ENCODE measurements at regions of chr9 and their contacts with region 1.

Region 1: GRCh38 chr9:114434878-114435311 is 47.1 kb upstream of the AKNA start:
- DNase-seq: peak; percentile 47 to 63
- ATAC-seq: peak; percentile 77 to 91; a peak in 5 of 6 replicates
- H3K4me3 ChIP-seq: no peak overlapping the region
- H3K27ac ChIP-seq: no peak overlapping the region
- H3K4me1 ChIP-seq: no peaks in the 10 kb centered on the region
- CTCF ChIP-seq: peak; percentile 66
- EP300 ChIP-seq: no peak
- POLR2A ChIP-seq: no peak
- RAD21 ChIP-seq: peak; percentile 78 to 87

Region 2: DNA sequence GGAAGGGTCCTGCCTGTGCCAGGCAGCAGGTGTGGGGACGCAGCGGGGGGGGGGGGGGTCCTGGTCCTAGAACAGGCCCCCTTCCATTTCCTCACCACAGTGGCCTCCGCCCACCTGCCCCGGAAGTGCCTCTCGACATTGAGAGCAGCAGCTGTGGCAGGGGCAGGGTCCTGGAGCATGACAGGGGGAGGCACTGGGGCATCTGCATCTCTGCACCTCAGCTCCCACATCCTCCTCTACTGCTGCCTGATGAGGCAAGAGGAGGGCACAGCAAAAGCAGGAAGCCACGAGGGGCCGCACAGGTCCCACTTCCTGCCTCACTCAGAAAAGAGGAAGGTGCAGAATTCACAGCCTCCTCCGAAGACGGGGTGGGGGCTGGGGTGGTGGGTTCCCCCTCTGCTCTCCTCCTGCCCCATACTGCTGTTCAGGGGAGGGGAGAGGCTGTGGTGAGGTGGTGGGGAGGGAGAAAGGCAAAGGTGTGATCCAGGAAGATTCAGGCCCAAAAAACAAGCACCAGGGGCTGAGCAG is 61.9 kb before region 1 on chr9:
- CTCF ChIA-PET with region 1: no interaction called
- POLR2A ChIA-PET with region 1: no interaction called
- DNase-seq: no peak
- ATAC-seq: no peak
- H3K4me3 ChIP-seq: no peak overlapping the region
- H3K27ac ChIP-seq: no peak overlapping the region
- H3K4me1 ChIP-seq: no peaks in the 10 kb centered on the region
- CTCF ChIP-seq: no peak
- EP300 ChIP-seq: no peak
- POLR2A ChIP-seq: no peak
- RAD21 ChIP-seq: no peak

Region 3: GRCh38 chr9:114413861-114414301 is 21.0 kb before region 1 on chr9:
- CTCF ChIA-PET with region 1: interaction called, 34 read pairs
- POLR2A ChIA-PET with region 1: interaction called, 3 read pairs
- DNase-seq: no peak
- ATAC-seq: no peak
- H3K4me3 ChIP-seq: no peak overlapping the region
- H3K27ac ChIP-seq: no peak overlapping the region
- H3K4me1 ChIP-seq: no peaks in the 10 kb centered on the region
- CTCF ChIP-seq: no peak
- EP300 ChIP-seq: no peak
- POLR2A ChIP-seq: no peak
- RAD21 ChIP-seq: no peak

Region 4: GRCh38 chr9:114446036-114446435 is 11.1 kb after region 1 on chr9:
- CTCF ChIA-PET with region 1: interaction called, 29 read pairs
- POLR2A ChIA-PET with region 1: no interaction called
- DNase-seq: no peak
- ATAC-seq: no peak; a peak in 1 of 6 replicates
- H3K4me3 ChIP-seq: no peak overlapping the region
- H3K27ac ChIP-seq: no peak overlapping the region; a peak in 1 of 6 replicates
- H3K4me1 ChIP-seq: peaks cover 10% of the 10 kb centered on the region; the same call in 1 of the 3 replicates
- CTCF ChIP-seq: no peak
- EP300 ChIP-seq: no peak
- POLR2A ChIP-seq: no peak
- RAD21 ChIP-seq: no peak

Region 5: DNA sequence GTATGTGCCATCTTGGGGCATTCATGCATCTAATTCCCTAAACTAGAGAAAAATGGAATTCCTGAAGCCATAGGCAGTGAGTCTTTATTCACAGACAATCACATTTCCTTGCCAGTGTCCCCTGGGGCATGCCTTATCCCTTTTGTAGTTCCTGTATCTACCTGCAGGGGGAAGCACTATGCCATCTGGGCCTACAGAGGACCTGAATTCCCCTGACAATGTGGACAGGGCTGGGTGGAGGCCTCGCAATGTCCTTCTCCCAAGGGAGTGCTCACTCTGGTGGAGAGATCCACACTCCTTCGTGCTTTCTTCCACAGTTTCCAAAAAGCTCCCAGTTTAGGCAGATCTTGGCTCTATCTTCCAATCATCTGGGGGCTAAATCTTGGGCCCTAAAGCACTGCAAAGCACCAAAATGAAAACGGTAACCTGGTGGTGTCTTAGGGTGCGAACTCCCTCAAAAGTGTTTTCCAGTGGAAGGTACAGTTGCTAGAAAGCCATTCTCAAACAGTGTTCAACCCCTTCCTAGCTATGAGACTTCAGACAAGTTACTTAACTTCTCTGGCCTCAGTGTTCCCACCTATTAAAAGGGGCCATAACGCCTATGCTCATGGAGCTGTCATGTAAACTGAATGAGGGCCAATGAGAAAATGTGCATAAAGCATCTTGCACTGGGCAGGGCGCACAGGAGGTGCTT is 52.9 kb after region 1 on chr9:
- CTCF ChIA-PET with region 1: interaction called, 37 read pairs
- POLR2A ChIA-PET with region 1: no interaction called
- DNase-seq: peak; percentile 74 to 79
- ATAC-seq: peak; percentile 92 to 98
- H3K4me3 ChIP-seq: no peak overlapping the region
- H3K27ac ChIP-seq: no peak overlapping the region
- H3K4me1 ChIP-seq: peaks cover 9% of the 10 kb centered on the region; the same call in 1 of the 3 replicates
- CTCF ChIP-seq: peak; percentile 77
- EP300 ChIP-seq: no peak
- POLR2A ChIP-seq: no peak
- RAD21 ChIP-seq: peak; percentile 84 to 87

Region 6: GRCh38 chr9:114633438-114634089 is 198.7 kb after region 1 on chr9:
- CTCF ChIA-PET with region 1: interaction called, 16 read pairs
- POLR2A ChIA-PET with region 1: no interaction called
- DNase-seq: no peak
- ATAC-seq: no peak
- H3K4me3 ChIP-seq: no peak overlapping the region
- H3K27ac ChIP-seq: no peak overlapping the region
- H3K4me1 ChIP-seq: no peaks in the 10 kb centered on the region
- CTCF ChIP-seq: no peak
- EP300 ChIP-seq: no peak
- POLR2A ChIP-seq: no peak
- RAD21 ChIP-seq: no peak

Region 7: DNA sequence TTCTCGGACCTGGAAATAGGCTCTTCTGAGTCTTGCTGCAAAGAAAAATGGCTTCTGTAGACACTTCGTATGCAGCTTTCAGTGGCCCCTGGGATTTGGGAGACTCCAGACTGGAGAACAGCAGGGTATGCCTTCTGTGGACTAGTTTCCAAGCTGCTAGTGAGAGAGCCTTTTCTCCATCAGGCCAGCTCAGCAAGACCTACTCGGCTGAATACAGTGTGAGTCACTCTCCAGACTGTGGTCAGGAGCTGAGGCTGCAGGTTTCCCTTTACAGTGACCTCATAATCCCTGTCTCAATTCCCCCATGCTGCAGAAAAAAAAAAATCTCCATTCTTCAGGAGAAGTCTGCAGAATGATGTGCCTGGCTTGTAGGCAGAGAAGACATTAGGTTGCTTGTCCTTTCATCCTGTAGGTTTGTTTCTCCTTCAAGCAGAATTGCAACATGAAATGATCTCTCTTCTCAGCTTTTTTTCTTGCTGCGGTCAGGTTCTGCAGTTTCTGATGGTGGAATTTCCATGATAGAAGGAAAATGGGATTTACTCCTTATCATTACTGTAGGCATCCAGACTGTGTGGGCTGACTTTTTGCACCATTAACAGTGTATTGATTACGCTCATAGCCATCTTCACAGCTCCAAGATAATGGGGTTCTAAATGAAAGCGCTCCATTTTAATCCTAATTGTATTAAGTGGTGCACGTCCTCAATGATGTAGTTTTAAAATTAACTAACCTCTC is 573.8 kb after region 1 on chr9:
- CTCF ChIA-PET with region 1: interaction called, 16 read pairs
- POLR2A ChIA-PET with region 1: no interaction called
- DNase-seq: peak; percentile 33 to 51
- ATAC-seq: peak; percentile 95 to 96
- H3K4me3 ChIP-seq: no peak overlapping the region
- H3K27ac ChIP-seq: peak overlapping the region in 1 of 2 experiments; percentile 34; a peak in 1 of 6 replicates
- H3K4me1 ChIP-seq: peaks cover 9% of the 10 kb centered on the region; the same call in 1 of the 3 replicates
- CTCF ChIP-seq: no peak
- EP300 ChIP-seq: no peak
- POLR2A ChIP-seq: no peak
- RAD21 ChIP-seq: 0 out of 5 replicates have a peak, but pooled peaks of 1 of the 2 experiments have one; percentile 14

Region 8: GRCh38 chr9:115359017-115359780 is 924.3 kb after region 1 on chr9:
- CTCF ChIA-PET with region 1: no interaction called
- POLR2A ChIA-PET with region 1: no interaction called
- DNase-seq: no peak
- ATAC-seq: no peak
- H3K4me3 ChIP-seq: no peak overlapping the region
- H3K27ac ChIP-seq: no peak overlapping the region
- H3K4me1 ChIP-seq: no peaks in the 10 kb centered on the region
- CTCF ChIP-seq: no peak
- EP300 ChIP-seq: no peak
- POLR2A ChIP-seq: no peak
- RAD21 ChIP-seq: no peak

Measured in A549 (cell line).